ENCODE measurements at regions of chr5 and their contacts with region 1.

Region 1: DNA sequence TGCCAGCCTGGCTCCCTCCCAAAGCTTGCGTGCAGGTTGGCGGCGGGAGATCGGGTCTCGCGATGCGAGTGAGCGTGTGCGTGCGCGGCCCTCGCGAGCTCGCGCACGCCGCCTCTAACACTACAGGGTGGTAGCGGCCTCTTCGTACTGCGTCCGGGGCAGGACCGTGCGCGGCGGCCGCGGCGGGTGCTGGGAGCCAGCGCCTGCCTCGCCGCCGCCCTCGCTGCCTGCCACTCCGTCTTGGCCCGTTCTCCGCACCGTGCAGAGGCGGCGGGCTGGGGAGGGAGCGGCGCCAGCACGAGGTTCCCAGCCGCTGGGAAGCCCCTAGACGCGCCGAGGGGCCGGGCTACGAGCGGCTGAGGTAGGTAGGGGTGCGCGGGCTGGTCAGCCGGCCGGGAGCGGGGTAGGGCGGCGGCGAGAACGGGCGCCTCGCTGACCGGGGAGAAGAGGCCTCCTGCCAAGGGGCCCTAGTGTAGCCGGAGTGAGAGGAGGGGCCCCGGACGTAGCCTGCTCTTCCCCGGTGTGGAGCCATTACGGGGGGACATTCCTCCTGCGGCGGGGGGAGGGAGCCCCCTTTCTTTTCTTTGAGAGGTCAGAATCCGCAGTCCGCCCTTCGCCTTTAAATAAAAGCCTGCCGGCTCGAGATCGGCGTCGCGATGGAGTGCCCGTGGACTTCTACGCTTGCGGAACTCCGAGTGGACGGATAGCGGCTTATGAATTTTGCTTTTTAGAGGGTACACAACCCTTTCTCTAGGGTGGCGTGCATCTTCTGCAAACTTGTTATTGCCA is at the start of gene C5orf24:
- DNase-seq: peak; percentile 97
- H3K4me3 ChIP-seq: peak within 1 kb of the TSS; percentile 68 to 86 (median 84)
- H3K4me3 Mint-ChIP-seq: peak within 1 kb of the TSS; percentile 87 to 91
- H3K27ac ChIP-seq: peak within 1 kb of the TSS; percentile 96 to 97
- H3K27ac Mint-ChIP-seq: peak within 1 kb of the TSS; percentile 88 to 95 (median 94)
- H3K4me1 ChIP-seq: peaks cover 18 to 20% of the 10 kb centered on the region in 2 donors
- H3K4me1 Mint-ChIP-seq: peaks cover 23% of the 10 kb centered on the region
- H3K27me3 ChIP-seq: no peaks in the 10 kb centered on the region
- H3K27me3 Mint-ChIP-seq: no peaks in the 10 kb centered on the region
- CTCF ChIP-seq: no peak
- polyA plus RNA-seq, gene C5orf24: 5.6 to 17.1 (median 6.6) TPM

Region 2: DNA sequence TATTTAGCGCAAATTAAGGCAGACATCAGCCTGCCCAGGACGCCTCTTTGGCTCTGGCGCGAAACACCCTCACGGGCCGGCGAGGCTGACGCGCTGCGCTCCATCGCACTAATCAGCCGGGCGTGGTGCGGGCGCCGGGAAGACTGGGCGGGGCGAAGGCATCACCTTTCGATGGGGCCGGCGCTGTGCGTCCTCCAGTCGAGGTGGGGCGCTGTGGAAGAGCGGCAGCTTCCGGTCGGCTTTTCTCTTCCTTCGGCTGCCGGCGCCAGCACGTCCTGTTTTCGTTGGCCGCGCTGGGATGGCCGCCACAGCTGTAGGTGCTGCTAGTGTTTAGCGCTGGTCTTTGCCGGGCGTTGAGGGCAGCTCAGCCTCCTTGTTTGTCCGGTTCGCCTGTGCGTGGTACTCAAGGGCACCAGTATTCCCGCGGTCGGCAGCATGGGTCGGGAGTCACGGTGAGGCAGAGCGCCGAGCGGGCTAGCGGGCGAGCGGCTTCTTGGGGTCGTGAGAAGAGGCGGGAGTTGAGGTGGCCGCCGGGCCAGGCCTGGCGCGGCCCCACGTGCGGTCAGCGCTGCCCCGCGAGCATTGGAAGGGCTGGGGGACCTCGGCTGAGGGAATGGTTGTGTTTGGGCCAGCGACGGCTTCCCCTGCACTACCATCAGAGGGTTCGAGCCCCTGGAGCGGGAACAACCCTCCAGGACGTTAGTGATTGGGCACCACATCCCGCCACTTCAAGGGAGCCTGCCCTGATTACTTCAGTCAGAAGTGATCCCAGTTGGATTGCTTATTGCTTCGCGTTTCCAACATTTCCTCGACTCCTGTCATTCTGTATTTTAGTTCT is 87.3 kb before region 1 on chr5 and contains the start of gene DDX46:
- intact Hi-C with region 1: loop called in 1 of 2 experiments (anchors 10 kb)
- DNase-seq: peak; percentile 87 to 91 (median 89)
- H3K4me3 ChIP-seq: peak within 1 kb of the TSS; percentile 75 to 91 (median 82)
- H3K4me3 Mint-ChIP-seq: peak within 1 kb of the TSS; percentile 99 to 100
- H3K27ac ChIP-seq: peak within 1 kb of the TSS; percentile 48 to 86
- H3K27ac Mint-ChIP-seq: peak within 1 kb of the TSS; percentile 90 to 98 (median 95)
- H3K4me1 ChIP-seq: peaks cover 25 to 29% of the 10 kb centered on the region in 2 donors
- H3K4me1 Mint-ChIP-seq: peaks cover 32% of the 10 kb centered on the region
- H3K27me3 ChIP-seq: no peaks in the 10 kb centered on the region
- H3K27me3 Mint-ChIP-seq: peaks cover 0 to 1% (median 0%) of the 10 kb centered on the region in 3 donors
- CTCF ChIP-seq: peak; percentile 82
- polyA plus RNA-seq, gene DDX46: 7.6 to 22.3 (median 11.8) TPM

Region 3: DNA sequence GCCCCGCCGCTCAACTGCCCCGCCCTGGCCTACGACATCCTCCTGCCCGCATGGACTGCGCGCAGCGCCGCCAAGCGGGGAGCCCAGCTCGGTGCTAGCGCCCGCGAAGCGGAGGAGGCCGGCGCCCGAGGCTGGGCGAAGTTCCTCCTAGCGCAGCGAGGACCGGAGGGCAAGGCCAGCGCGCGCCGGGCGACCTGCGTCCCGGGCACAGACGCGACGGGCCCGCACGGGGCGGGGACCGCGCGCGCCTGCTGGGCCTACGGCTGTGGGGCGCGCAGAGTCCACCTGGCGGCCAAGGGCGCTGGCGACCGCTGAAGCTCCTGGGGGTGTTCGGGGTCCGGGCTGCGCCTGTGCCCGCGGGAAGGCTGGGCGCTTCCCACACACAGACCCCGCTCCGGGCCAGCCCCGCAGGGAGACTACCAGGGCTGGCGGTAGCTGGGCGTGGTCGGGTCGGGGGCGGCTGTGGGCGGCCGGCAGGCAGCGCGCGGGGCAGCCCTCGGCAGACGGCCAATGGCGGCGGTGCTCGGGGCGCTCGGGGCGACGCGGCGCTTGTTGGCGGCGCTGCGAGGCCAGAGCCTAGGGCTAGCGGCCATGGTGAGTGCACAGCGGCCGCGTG is 58.7 kb after region 1 on chr5 and contains the start of gene PCBD2:
- intact Hi-C with region 1: loop called in 1 of 2 experiments (anchors 5 kb)
- DNase-seq: peak; percentile 90 to 94 (median 92)
- H3K4me3 ChIP-seq: peak within 1 kb of the TSS; percentile 86 to 99 (median 98)
- H3K4me3 Mint-ChIP-seq: peak within 1 kb of the TSS; percentile 85 to 92
- H3K27ac ChIP-seq: peak within 1 kb of the TSS; percentile 92 to 94
- H3K27ac Mint-ChIP-seq: peak within 1 kb of the TSS; percentile 86 to 97 (median 95)
- H3K4me1 ChIP-seq: peaks cover 20 to 34% of the 10 kb centered on the region in 2 donors
- H3K4me1 Mint-ChIP-seq: peaks cover 20% of the 10 kb centered on the region
- H3K27me3 ChIP-seq: no peaks in the 10 kb centered on the region
- H3K27me3 Mint-ChIP-seq: no peaks in the 10 kb centered on the region
- CTCF ChIP-seq: peak; percentile 80
- polyA plus RNA-seq, gene PCBD2: 9.0 to 12.6 (median 9.0) TPM